ENCODE measurements at regions of chr11 and their contacts with region 1.

Region 1: DNA sequence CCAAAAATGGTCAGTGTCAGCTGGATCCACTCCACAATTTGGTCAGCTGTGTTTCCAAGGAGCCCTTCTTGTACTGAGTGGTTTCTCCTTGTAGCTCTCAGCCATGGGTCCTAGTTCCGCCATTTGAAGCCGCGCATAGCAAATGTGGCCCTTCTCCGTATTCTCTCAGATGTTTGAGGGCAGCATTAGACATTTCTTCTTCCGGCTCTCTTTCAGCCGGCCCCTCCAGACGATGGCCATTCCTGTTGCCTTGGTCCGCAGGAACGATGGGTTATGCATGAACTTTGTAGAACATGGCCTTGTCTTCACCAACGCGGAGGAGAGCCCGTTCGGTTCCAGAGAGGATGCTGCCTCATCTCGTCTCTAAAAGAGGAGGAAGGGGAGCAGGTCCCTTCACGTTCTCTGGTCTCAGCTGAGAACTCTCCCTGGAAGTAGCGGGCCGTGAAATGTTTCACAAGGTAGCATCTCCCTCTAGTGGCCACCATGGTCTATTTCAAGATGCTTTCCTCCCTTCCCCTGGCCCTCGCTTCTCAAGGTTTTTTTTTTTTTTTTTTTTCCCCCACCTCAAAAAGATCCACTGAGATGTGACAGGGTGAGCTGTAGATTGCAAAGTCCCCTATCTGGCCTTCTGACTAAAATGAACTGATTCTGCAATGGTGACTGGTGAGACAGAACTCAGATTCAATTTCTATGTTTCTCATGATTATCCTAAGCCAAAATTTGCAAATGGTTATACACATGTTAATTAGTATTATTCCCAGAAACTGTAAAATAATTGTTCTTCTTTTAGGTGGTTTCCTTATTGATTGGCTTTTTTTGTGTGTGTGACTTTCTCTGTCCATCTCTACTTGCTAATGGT is 19.8 kb upstream of the PLET1 start:
- DNase-seq: peak; percentile 53 to 74
- H3K4me3 ChIP-seq: peak overlapping the region; percentile 31 to 32
- H3K27ac ChIP-seq: peak overlapping the region; percentile 64 to 67
- H3K4me1 ChIP-seq: no peaks in the 10 kb centered on the region
- H3K27me3 ChIP-seq: no peaks in the 10 kb centered on the region
- CTCF ChIP-seq: peak; percentile 41 to 81 (median 70)
- POLR2A ChIP-seq: no peak

Region 2: GRCh38 chr11:112113539-112114457 is 166.7 kb before region 1 on chr11:
- intact Hi-C with region 1: loop called (anchors 10 kb)
- DNase-seq: no peak
- H3K4me3 ChIP-seq: no peak overlapping the region
- H3K27ac ChIP-seq: no peak overlapping the region
- H3K4me1 ChIP-seq: no peaks in the 10 kb centered on the region
- H3K27me3 ChIP-seq: no peaks in the 10 kb centered on the region
- CTCF ChIP-seq: peak; percentile 61 to 73 (median 62)
- POLR2A ChIP-seq: no peak

Region 3: GRCh38 chr11:112219476-112220232 is 60.8 kb before region 1 on chr11:
- intact Hi-C with region 1: loop called (anchors 5 kb)
- DNase-seq: peak; percentile 19 to 51
- H3K4me3 ChIP-seq: no peak overlapping the region
- H3K27ac ChIP-seq: peak overlapping the region in 1 of 2 donors; percentile 45
- H3K4me1 ChIP-seq: no peaks in the 10 kb centered on the region
- H3K27me3 ChIP-seq: no peaks in the 10 kb centered on the region
- CTCF ChIP-seq: peak; percentile 80 to 94 (median 87)
- POLR2A ChIP-seq: peak in 1 of 2 donors; percentile 12

Measured in uterus (tissue), 4 donors.